Activated naive CD4-positive, alpha-beta T cell treated with anti-CD3 and anti-CD28 coated beads, Interleukin-2, amount 10 ng/mL, durations not matched to agents 7 days and 5 days (primary cell): ENCODE measurements at regions of chr5 and their contacts with region 1.

Region 1: GRCh38 chr5:171907725-171908343 is 98.6 kb downstream of the FBXW11 start:
- DNase-seq: peak; percentile 62
- H3K4me3 Mint-ChIP-seq: no peak overlapping the region
- H3K27ac Mint-ChIP-seq: no peak overlapping the region
- H3K4me1 Mint-ChIP-seq: peaks cover 30% of the 10 kb centered on the region
- H3K27me3 Mint-ChIP-seq: no peaks in the 10 kb centered on the region

Region 2: DNA sequence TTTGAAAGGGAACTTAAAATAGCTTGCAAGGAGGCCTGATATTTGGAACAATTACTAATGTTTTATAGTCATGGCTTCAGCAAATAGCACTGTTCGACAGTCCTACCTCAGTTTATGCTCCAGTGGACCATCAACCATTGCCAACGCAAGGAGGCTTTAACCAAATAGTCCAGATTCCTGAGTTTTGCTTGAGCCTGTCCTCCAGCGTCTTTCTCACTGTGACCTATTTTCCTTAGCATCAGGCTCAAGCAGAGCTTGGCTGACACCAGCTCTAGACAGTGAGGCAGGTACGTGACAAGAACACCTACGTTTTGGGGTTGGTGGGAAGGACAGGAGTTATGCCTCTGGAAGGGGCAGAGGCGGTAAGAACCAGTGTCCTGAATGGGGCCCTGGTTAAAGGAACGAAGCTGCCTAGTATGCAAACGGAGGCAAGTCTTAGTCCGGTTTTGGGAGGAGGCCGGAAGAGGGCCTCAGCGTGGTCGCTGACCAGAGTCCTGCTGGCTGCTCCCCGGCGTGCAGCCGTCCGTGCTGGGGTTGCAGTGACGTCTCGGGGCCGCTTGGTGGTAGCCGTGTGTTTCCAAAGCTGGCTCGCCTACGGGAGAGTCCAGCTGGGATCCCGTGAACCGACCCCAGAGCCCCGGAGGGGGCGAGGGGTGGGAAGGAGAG is 489.4 kb before region 1 on chr5:
- CTCF ChIA-PET with region 1: interaction called, 15 read pairs
- DNase-seq: peak; percentile 68
- H3K4me3 Mint-ChIP-seq: peak overlapping the region; percentile 68
- H3K27ac Mint-ChIP-seq: no peak overlapping the region
- H3K4me1 Mint-ChIP-seq: peaks cover 14% of the 10 kb centered on the region
- H3K27me3 Mint-ChIP-seq: peaks cover 45% of the 10 kb centered on the region